ENCODE measurements at regions of chr18 and their contacts with region 1.

Region 1: GRCh38 chr18:80157708-80158343 is 48.8 kb downstream of the ADNP2 start:
- DNase-seq: peak; percentile 88
- ATAC-seq: no peak
- H3K4me3 Mint-ChIP-seq: no peak overlapping the region
- H3K27ac Mint-ChIP-seq: no peak overlapping the region
- H3K4me1 Mint-ChIP-seq: peaks cover 3% of the 10 kb centered on the region
- H3K27me3 Mint-ChIP-seq: peaks cover 22% of the 10 kb centered on the region

Region 2: GRCh38 chr18:79797518-79798345 is 360.1 kb before region 1 on chr18 and contains the start of gene KCNG2:
- CTCF ChIA-PET with region 1: no interaction called
- POLR2A ChIA-PET with region 1: no interaction called
- intact Hi-C with region 1: loop called (anchors 5 to 10 kb)
- DNase-seq: peak; percentile 67
- ATAC-seq: peak; percentile 83
- H3K4me3 Mint-ChIP-seq: peak within 1 kb of the TSS; percentile 56
- H3K27ac Mint-ChIP-seq: no peak within 1 kb of the TSS
- H3K4me1 Mint-ChIP-seq: peaks cover 11% of the 10 kb centered on the region
- H3K27me3 Mint-ChIP-seq: peaks cover 31% of the 10 kb centered on the region
- total RNA-seq, gene KCNG2: not detected

Region 3: DNA sequence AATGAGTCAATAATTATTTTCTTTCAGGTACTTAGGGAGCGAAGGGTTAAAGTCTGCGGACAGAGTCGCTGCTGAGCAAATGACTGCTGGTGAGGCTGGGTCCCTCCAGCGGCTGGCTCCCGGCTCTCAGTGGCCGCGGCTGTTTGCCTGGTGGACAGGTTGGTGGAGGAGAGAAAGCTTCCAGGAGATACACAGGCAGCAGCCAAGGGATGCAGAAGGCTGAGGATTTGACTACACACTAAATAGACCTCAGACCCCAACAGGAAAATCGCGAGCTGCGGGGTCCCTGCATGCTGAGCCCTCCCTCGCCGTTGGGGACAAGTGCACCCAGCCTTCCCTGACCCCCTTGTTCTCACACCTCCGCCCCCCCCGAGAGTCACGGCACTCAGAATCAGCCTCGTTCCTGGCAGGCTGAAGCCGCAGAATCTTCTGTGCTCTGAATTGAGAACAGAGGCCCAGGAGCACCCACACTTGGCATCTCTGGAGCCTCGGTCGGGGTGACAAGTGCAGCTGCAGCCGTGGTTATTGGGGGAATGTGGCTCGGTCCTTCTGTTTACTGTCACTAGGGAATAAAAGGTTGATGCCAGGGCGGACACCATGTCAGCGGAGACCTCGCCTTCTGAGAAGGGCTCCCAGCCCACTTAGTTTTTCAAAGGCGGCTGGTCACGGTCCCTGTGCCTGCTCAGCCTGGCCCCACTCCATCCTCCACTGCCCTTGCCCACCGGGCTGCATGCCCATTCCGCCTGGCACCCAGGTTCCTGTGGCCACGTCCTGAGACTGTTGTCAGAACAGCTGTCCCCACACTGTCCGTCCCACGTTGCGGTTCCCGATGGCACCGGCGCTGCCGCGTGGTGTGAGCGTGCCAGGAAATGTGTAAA is 280.4 kb before region 1 on chr18:
- CTCF ChIA-PET with region 1: no interaction called
- POLR2A ChIA-PET with region 1: no interaction called
- intact Hi-C with region 1: no loop called
- DNase-seq: no peak
- ATAC-seq: no peak
- H3K4me3 Mint-ChIP-seq: no peak overlapping the region
- H3K27ac Mint-ChIP-seq: no peak overlapping the region
- H3K4me1 Mint-ChIP-seq: no peaks in the 10 kb centered on the region
- H3K27me3 Mint-ChIP-seq: no peaks in the 10 kb centered on the region

Region 4: GRCh38 chr18:80171054-80171872 is 13.4 kb after region 1 on chr18:
- CTCF ChIA-PET with region 1: interaction called, 10 read pairs
- POLR2A ChIA-PET with region 1: no interaction called
- intact Hi-C with region 1: no loop called
- DNase-seq: peak; percentile 81
- ATAC-seq: peak; percentile 10
- H3K4me3 Mint-ChIP-seq: no peak overlapping the region
- H3K27ac Mint-ChIP-seq: no peak overlapping the region
- H3K4me1 Mint-ChIP-seq: peaks cover 6% of the 10 kb centered on the region
- H3K27me3 Mint-ChIP-seq: peaks cover 43% of the 10 kb centered on the region

Region 5: DNA sequence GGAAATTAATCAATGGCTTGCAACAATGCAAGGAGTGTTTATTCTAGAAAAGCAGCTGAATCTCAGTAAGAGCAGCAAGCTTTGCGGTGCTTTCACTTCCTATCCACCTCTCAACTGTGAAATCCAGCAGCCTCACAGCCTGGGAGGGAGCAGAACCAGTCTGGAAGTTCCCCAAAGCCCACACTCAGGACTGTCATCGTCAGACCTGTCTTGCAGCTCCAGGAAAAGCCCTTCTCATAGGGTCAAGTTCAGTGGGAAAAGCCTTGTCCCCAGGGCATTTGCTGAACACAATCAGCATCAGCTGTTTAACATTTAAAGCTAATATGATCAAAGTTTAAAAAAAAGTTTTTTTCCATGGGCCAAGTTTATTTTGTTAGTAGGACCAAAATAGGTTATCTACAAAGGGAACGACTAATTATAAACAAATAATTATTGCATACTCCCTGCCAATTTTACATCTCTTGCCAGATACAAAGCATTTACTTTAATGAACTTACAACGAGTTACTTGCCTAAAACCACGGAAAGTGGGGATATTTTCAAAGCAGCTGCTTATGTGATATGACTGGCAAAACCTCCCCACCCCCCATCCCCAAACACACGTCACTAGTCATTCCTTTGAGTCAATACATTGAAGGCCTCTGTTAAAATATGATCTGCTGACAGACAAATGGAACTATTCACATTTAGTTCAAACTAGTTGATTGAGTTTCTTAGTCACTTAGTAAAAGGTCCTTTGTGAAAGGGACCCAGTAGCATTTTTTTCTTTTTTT is 52.7 kb after region 1 on chr18:
- CTCF ChIA-PET with region 1: interaction called, 14 read pairs
- POLR2A ChIA-PET with region 1: no interaction called
- intact Hi-C with region 1: no loop called
- DNase-seq: no peak
- ATAC-seq: no peak
- H3K4me3 Mint-ChIP-seq: no peak overlapping the region
- H3K27ac Mint-ChIP-seq: no peak overlapping the region
- H3K4me1 Mint-ChIP-seq: no peaks in the 10 kb centered on the region
- H3K27me3 Mint-ChIP-seq: peaks cover 36% of the 10 kb centered on the region

Measured in activated CD4-positive, alpha-beta T cell treated with anti-CD3 and anti-CD28 coated beads for 36 hours (primary cell).